AG04449 (cell line): ENCODE measurements at regions of chr20 and their contacts with region 1.

Region 1: DNA sequence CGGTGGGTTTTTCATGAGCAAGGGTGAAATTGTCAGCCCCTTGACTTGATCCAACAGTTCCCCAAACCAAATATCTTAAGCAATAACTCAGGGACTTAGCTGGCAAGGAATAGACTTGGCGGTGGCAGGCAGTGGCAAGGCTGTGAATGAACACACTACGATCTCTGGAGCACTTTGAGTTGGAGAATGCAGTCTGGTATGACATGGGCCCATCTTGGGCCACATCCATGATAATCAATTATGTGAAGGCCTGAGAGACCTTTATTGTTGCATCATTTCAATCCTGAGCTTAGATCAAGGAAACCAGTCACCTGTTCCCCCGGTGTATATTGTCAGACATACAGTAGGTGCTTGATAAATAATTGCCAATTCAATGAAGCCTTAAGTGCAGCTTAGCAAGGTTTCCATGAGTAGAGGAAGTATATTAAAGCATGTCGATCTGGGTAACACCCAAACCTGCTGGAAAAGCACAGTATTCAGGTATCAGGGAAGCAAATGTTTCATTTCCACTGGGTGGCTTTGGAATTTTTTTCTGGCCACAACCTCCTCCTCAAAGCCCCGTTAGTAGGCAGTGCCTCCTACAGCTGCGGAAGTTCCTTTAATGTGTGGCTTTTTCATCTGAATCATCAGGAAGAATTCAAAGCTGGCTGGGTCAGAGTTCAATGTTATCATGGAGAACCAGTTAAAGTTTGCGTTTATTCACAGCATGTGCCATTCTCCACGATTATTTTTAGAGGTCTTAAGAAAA is 10.2 kb downstream of the CASS4 start:
- DNase-seq: no peak
- H3K4me3 ChIP-seq: no peak overlapping the region
- CTCF ChIP-seq: no peak

Region 2: DNA sequence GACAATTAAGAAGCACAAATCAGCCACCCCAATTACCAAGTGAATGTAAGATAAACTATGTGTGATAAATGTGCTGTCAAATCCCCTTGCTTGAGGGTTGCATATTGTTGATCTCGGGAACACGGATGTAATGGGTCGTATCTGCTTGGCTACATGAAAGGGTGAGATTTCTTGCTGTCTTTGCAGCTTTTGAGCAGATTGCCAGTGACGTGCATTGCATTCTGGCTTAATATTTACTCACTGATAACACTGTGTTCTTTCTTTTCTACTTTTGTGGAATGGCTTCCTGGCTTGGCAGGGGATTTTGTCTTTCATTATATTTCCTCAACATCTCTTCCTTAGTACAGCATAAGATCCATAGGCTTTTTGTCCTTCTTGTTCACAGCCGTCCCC is 73.9 kb before region 1 on chr20:
- CTCF ChIA-PET with region 1: no interaction called
- POLR2A ChIA-PET with region 1: no interaction called
- DNase-seq: no peak
- H3K4me3 ChIP-seq: no peak overlapping the region
- CTCF ChIP-seq: no peak

Region 3: DNA sequence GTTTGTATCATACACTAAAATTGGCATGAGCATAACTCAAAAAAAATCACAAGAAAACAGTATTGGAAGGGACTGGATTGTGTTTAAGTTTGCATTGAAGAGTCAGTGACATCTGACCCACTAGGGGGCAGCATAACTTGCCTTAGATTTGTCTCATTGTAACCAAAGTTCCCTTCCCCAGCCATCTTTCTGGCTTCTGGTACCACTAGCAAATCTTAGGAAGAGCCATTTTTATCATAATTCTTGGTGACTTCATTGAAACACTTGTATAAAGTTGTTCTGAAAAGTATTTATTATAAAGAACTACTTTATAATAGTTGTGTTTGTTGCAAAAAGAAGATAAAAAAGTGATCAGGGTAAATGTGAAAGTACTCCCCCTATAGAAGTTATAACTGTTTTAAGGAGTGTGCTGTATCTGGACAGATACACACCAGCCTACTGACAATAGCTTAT is 22.1 kb before region 1 on chr20:
- CTCF ChIA-PET with region 1: interaction called, 10 read pairs
- POLR2A ChIA-PET with region 1: no interaction called
- DNase-seq: no peak
- H3K4me3 ChIP-seq: no peak overlapping the region
- CTCF ChIP-seq: peak; percentile 72

Region 4: DNA sequence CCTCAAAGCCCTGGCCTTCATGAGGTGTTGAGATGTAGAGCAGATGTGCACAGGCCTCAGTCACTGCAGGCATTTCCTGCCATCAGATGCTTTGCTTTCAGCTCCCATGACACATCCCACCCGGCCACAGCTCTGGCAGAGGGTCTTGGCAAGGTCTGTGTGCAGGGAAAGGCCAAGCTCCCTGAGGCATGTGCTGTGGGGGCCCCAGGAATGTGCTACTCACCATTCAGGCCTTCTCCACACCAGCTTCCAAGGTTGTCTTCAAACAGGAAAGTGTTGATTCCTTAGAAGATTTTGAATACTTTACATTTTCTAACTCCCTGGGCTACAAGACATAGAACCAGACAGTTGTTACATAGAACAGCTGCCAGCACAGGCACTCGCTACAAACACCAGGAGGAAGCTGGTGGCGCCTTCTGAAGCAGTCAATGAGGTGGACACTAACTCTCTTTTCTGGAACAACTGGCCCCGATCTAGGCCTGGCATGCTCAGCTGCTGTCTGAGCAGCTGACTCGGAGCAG is 17.6 kb after region 1 on chr20:
- CTCF ChIA-PET with region 1: interaction called, 10 read pairs
- POLR2A ChIA-PET with region 1: interaction called, 8 read pairs
- DNase-seq: peak; percentile 98
- H3K4me3 ChIP-seq: no peak overlapping the region
- CTCF ChIP-seq: no peak

Region 5: DNA sequence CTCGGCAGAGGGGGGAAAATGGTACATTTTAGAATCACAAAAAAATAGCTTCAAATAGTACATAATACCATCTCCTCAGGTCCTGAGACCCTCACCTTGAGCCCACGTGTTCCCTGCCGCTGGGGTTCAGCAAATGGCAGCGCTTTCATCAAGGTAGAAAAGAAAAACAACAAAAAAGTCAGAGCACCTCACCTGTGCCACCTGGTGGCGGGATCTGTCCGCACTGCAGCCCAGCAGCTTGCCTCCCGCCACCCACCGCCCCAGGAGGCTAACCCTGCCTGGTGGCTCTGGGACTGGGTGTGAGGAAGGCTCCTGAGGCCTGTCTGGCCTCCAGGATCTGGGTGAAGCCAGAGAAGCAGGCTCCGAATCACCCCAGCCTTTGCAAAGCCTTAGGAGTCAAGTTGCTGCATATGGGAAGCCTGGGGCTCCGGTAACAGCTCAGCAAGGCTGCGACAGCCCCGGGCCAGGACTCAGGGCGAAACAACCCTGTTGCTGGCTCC is 573.4 kb after region 1 on chr20:
- CTCF ChIA-PET with region 1: no interaction called
- POLR2A ChIA-PET with region 1: no interaction called
- DNase-seq: no peak
- H3K4me3 ChIP-seq: no peak overlapping the region
- CTCF ChIP-seq: peak; percentile 57